Heart left ventricle (tissue), 16 donors: ENCODE measurements at regions of chr9 and their contacts with region 1.

Region 1: DNA sequence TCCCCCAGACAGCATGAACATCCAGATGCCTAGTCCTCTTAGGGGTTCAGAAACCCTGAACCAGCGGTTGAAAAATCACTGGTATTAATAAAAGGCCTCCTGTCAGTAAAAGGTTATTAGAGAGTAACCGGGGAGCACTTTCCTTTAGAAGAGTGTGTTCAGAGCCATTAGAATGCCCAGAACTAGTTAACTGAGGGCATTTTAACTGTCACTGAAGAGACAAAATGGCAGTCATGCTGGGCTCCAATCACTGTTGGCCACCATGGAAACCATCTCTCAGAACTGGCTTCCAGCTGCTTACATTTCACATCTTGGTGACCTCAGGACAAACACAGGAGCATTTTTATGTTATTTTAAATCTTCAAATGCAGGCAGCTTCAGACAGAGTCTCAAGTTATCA is 36.2 kb upstream of the GDA start:
- DNase-seq: no peak
- ATAC-seq: no peak
- H3K4me3 ChIP-seq: no peak overlapping the region
- H3K27ac ChIP-seq: no peak overlapping the region
- H3K4me1 ChIP-seq: no peaks in the 10 kb centered on the region
- H3K27me3 ChIP-seq: no peaks in the 10 kb centered on the region
- CTCF ChIP-seq: no peak
- POLR2A ChIP-seq: no peak

Region 2: GRCh38 chr9:72038890-72039410 is 74.1 kb before region 1 on chr9:
- intact Hi-C with region 1: no loop called
- DNase-seq: peak; percentile 64 to 72 (median 71)
- ATAC-seq: peak; percentile 62 to 90 (median 86)
- H3K4me3 ChIP-seq: no peak overlapping the region
- H3K27ac ChIP-seq: no peak overlapping the region
- H3K4me1 ChIP-seq: peaks cover 0 to 9% (median 0%) of the 10 kb centered on the region in 12 donors
- H3K27me3 ChIP-seq: no peaks in the 10 kb centered on the region
- CTCF ChIP-seq: peak; percentile 87 to 99 (median 97)
- POLR2A ChIP-seq: no peak

Region 3: GRCh38 chr9:72169178-72169577 is 56.1 kb after region 1 on chr9:
- intact Hi-C with region 1: no loop called
- DNase-seq: no peak
- ATAC-seq: peak in 1 of 4 donors; percentile 47
- H3K4me3 ChIP-seq: no peak overlapping the region
- H3K27ac ChIP-seq: no peak overlapping the region
- H3K4me1 ChIP-seq: peaks cover 0 to 5% (median 0%) of the 10 kb centered on the region in 12 donors
- H3K27me3 ChIP-seq: no peaks in the 10 kb centered on the region
- CTCF ChIP-seq: no peak
- POLR2A ChIP-seq: no peak

Region 4: DNA sequence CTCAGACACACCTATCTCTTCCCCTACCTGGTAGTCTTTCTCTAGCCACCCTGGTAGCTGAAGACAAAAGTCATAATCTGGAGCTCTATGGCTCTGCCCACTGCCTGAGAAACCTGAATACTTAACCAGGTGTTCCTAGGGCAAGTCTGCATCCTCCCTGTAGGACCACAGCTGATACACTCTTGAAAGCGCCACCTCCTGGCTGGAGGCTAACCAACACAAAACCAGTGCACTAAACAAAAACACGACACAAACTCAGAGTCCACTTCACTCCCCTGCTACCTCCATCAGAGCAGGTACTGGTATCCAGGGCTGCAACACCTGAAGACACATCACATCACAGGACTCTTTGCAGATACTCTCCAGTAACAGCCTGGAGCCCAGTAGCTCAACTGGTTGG is 954.0 kb after region 1 on chr9:
- intact Hi-C with region 1: loop called in 1 of 10 experiments (anchors 5 kb)
- DNase-seq: no peak
- ATAC-seq: no peak
- H3K4me3 ChIP-seq: no peak overlapping the region
- H3K27ac ChIP-seq: no peak overlapping the region
- H3K4me1 ChIP-seq: no peaks in the 10 kb centered on the region
- H3K27me3 ChIP-seq: no peaks in the 10 kb centered on the region
- CTCF ChIP-seq: no peak
- POLR2A ChIP-seq: no peak